Endothelial cell of umbilical vein (primary cell): ENCODE measurements at regions of chrX and their contacts with region 1.

Region 1: GRCh38 chrX:27565992-27566391 is 24.2 kb upstream of the DCAF8L2 start:
- DNase-seq: peak; percentile 94
- H3K4me3 ChIP-seq: no peak overlapping the region
- H3K27ac ChIP-seq: peak overlapping the region; percentile 96
- H3K4me1 ChIP-seq: peaks cover 15% of the 10 kb centered on the region
- H3K27me3 ChIP-seq: no peaks in the 10 kb centered on the region
- CTCF ChIP-seq: no peak
- POLR2A ChIP-seq: no peak

Region 2: DNA sequence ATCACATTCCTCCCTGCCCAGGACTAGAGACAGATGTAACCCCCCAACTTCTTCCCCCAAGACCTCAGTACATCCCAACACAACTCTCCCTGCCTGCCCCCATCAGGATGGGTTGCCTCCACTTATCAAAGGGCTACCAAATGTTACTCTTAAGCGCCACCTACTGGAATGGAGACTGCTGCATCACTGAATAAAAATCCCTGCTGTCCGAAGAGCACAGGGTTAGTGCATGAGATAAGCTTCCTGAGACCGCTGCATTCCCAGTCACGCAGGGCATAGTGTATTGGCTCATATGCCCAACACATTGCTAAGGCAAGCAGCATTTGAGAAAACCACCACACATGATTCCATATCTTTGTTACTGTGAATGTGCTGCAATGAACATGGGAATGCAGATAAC is 647.4 kb before region 1 on chrX:
- CTCF ChIA-PET with region 1: interaction called, 3 read pairs
- POLR2A ChIA-PET with region 1: no interaction called
- dilution Hi-C with region 1: no loop called
- intact Hi-C with region 1: loop called (anchors 1 kb)
- DNase-seq: peak; percentile 31
- H3K4me3 ChIP-seq: no peak overlapping the region
- H3K27ac ChIP-seq: no peak overlapping the region
- H3K4me1 ChIP-seq: peaks cover 36% of the 10 kb centered on the region
- H3K27me3 ChIP-seq: no peaks in the 10 kb centered on the region
- CTCF ChIP-seq: peak; percentile 17 to 26
- POLR2A ChIP-seq: no peak

Region 3: DNA sequence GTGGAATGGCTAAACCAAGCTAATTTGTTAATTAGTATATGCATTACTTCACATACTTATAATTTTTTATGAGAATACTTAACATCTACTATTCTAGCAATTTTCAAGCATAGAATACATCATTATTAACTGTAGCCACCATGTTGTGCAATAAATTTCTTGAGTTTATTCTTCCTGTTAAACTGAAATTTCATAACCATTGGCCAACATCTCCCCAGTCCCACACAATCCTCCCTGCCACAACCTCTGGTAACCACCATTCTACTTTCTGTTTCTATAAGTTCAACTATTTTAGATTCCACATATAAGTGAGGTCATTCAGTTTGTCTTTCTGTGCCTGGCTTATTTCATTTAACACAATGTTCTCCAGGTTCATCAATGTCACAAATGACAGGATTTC is 311.3 kb before region 1 on chrX:
- CTCF ChIA-PET with region 1: no interaction called
- POLR2A ChIA-PET with region 1: no interaction called
- dilution Hi-C with region 1: no loop called
- intact Hi-C with region 1: no loop called
- DNase-seq: no peak
- H3K4me3 ChIP-seq: no peak overlapping the region
- H3K27ac ChIP-seq: no peak overlapping the region
- H3K4me1 ChIP-seq: no peaks in the 10 kb centered on the region
- H3K27me3 ChIP-seq: no peaks in the 10 kb centered on the region
- CTCF ChIP-seq: no peak
- POLR2A ChIP-seq: no peak

Region 4: DNA sequence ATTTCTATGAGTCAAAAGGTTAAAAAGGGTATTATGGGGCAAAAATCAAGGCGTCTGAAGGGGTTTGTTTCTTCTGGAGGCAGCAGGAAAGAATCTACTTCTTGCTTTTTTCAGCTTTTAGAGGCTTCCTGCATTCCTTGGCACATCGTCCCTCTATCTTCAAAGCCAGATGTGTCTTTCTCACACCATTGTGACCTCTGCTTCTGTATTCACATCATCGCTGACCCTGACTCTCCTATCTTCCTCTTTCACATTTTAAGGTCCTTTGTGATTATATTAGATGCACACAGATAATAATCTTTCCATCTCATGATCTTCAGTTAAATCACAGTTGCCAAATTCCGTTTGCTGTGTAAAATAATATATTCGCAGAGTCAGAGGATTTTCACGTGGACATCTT is 215.5 kb before region 1 on chrX:
- CTCF ChIA-PET with region 1: no interaction called
- POLR2A ChIA-PET with region 1: no interaction called
- dilution Hi-C with region 1: no loop called
- intact Hi-C with region 1: loop called (anchors 5 kb)
- DNase-seq: peak; percentile 89
- H3K4me3 ChIP-seq: no peak overlapping the region
- H3K27ac ChIP-seq: no peak overlapping the region
- H3K4me1 ChIP-seq: peaks cover 14% of the 10 kb centered on the region
- H3K27me3 ChIP-seq: no peaks in the 10 kb centered on the region
- CTCF ChIP-seq: no peak
- POLR2A ChIP-seq: no peak

Region 5: DNA sequence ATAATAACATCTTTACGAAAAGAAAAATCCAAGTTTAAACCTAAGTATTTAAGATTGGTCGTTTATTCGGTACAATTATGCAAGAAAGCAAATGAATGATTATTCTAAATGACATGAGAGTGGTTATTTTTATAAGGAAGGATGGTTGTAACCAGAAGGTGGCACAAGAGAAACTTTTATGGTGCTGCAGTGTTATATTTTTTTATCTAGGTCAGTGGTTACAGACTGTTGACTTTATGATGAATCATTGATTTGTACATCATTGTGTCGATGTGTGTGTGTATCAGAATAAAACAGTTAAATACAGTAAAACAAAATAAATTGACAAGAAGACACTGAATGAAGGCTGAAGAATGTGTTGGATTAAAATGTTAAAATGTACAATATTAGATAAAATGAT is 33.9 kb after region 1 on chrX:
- CTCF ChIA-PET with region 1: no interaction called
- POLR2A ChIA-PET with region 1: no interaction called
- dilution Hi-C with region 1: no loop called
- intact Hi-C with region 1: loop called (anchors 1 kb)
- DNase-seq: peak; percentile 70
- H3K4me3 ChIP-seq: no peak overlapping the region
- H3K27ac ChIP-seq: peak overlapping the region; percentile 50
- H3K4me1 ChIP-seq: peaks cover 9% of the 10 kb centered on the region
- H3K27me3 ChIP-seq: no peaks in the 10 kb centered on the region
- CTCF ChIP-seq: no peak
- POLR2A ChIP-seq: no peak

Region 6: GRCh38 chrX:27890611-27891010 is 324.6 kb after region 1 on chrX:
- CTCF ChIA-PET with region 1: no interaction called
- POLR2A ChIA-PET with region 1: no interaction called
- dilution Hi-C with region 1: no loop called
- intact Hi-C with region 1: loop called (anchors 2 kb)
- DNase-seq: peak; percentile 80
- H3K4me3 ChIP-seq: no peak overlapping the region
- H3K27ac ChIP-seq: peak overlapping the region; percentile 80
- H3K4me1 ChIP-seq: peaks cover 14% of the 10 kb centered on the region
- H3K27me3 ChIP-seq: no peaks in the 10 kb centered on the region
- CTCF ChIP-seq: no peak
- POLR2A ChIP-seq: no peak